Activated B cell treated with CpG ODN at 0.5 μM for 24 hours (primary cell): ENCODE measurements at regions of chr11 and their contacts with region 1.

Region 1: GRCh38 chr11:128559496-128560103 is 27.8 kb downstream of the ETS1 start:
- DNase-seq: no peak
- ATAC-seq: no peak
- H3K4me3 Mint-ChIP-seq: peak overlapping the region; percentile 16
- H3K27ac Mint-ChIP-seq: no peak overlapping the region
- H3K4me1 Mint-ChIP-seq: peaks cover 55% of the 10 kb centered on the region
- H3K27me3 Mint-ChIP-seq: no peaks in the 10 kb centered on the region
- CTCF ChIP-seq: no peak

Region 2: DNA sequence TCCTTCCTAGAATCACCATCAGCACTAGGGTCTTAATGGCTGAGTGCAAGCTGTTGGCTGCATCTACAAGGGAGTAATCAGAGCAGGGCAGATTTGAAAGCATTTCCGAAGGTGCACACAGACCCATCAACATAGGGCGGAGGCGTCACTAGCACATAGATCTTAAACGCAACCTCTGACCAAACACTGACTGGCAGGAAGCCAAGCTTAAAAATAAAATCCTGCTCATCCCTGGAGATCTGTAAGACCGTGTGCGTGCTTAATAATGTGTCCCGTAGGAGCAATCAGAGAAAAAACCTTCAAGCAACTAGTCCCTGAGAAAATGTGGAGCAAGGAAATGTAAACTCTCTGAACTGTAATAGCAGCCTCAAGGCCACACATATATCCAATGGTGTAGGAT is 442.7 kb before region 1 on chr11:
- CTCF ChIA-PET with region 1: no interaction called
- POLR2A ChIA-PET with region 1: no interaction called
- intact Hi-C with region 1: no loop called
- DNase-seq: no peak
- ATAC-seq: no peak
- H3K4me3 Mint-ChIP-seq: no peak overlapping the region
- H3K27ac Mint-ChIP-seq: no peak overlapping the region
- H3K4me1 Mint-ChIP-seq: no peaks in the 10 kb centered on the region
- H3K27me3 Mint-ChIP-seq: peaks cover 29% of the 10 kb centered on the region
- CTCF ChIP-seq: no peak

Region 3: GRCh38 chr11:128595221-128595620 is 35.6 kb after region 1 on chr11:
- CTCF ChIA-PET with region 1: no interaction called
- POLR2A ChIA-PET with region 1: interaction called, 4 read pairs
- intact Hi-C with region 1: loop called (anchors 5 kb)
- DNase-seq: no peak
- ATAC-seq: no peak
- H3K4me3 Mint-ChIP-seq: no peak overlapping the region
- H3K27ac Mint-ChIP-seq: peak overlapping the region; percentile 75
- H3K4me1 Mint-ChIP-seq: peaks cover 52% of the 10 kb centered on the region
- H3K27me3 Mint-ChIP-seq: no peaks in the 10 kb centered on the region
- CTCF ChIP-seq: no peak